Common myeloid progenitor, CD34-positive (primary cell): ENCODE measurements at regions of chr17 and their contacts with region 1.

Region 1: GRCh38 chr17:17681187-17681848 is at the start of gene RAI1:
- DNase-seq: peak; percentile 73 to 86 (median 83)
- H3K4me3 ChIP-seq: peak within 1 kb of the TSS; percentile 56 to 81 (median 77)
- H3K27ac ChIP-seq: peak within 1 kb of the TSS; percentile 70 to 89
- H3K4me1 ChIP-seq: peaks cover 0 to 57% (median 38%) of the 10 kb centered on the region in 4 experiments
- H3K27me3 ChIP-seq: no peaks in the 10 kb centered on the region

Region 2: DNA sequence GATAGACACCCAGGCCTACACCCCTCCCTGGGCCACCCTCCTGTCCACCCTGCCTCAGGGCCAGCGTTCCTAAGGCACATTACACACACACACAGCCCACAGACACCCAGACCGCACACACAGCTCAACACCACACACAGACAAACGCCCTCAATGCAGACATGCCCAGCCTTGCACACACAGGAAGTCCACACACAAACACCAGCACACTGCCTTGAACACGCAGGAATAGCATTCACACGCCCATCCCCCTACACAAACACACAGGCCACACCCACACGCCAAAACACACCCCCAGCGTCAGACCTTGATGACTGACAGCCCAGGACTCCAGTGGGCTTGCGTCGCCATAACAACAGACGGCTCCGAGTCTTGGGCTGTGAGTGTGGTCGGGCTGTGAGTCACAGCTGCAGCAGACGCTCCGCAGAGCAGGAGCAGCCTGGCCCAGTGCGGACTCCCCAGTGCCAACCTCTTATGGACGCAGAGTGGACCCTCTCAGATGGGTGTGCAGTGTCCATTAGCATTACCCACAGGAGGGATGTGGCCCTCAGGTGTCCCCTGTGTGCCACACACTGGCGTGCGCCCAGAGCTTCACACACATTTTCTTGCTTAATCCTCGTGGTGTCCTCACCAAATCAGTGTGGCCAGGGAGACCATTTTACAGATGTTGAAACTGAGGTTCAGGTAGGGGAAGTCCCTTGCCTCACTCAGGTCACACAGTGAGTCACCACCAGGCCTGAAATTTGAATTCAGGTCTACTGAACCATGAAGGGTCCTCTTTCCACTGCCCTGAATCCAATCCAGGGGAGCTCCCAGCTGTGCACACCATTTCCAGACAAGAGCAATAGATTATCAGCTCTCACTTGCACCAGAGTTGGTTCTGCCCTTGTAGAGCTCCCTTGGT is 17.9 kb before region 1 on chr17:
- CTCF ChIA-PET with region 1: interaction called, 20 read pairs
- POLR2A ChIA-PET with region 1: no interaction called
- DNase-seq: peak; percentile 90 to 98 (median 97)
- H3K4me3 ChIP-seq: no peak overlapping the region
- H3K27ac ChIP-seq: no peak overlapping the region
- H3K4me1 ChIP-seq: peaks cover 0 to 23% (median 8%) of the 10 kb centered on the region in 4 experiments
- H3K27me3 ChIP-seq: no peaks in the 10 kb centered on the region

Region 3: GRCh38 chr17:17668775-17669579 is 12.3 kb before region 1 on chr17:
- CTCF ChIA-PET with region 1: interaction called, 20 read pairs
- POLR2A ChIA-PET with region 1: no interaction called
- DNase-seq: peak in 2 of 3 donors; percentile 75 to 76
- H3K4me3 ChIP-seq: no peak overlapping the region
- H3K27ac ChIP-seq: no peak overlapping the region
- H3K4me1 ChIP-seq: peaks cover 4 to 52% (median 17%) of the 10 kb centered on the region in 4 experiments
- H3K27me3 ChIP-seq: no peaks in the 10 kb centered on the region

Region 4: GRCh38 chr17:17694169-17695081 is 13.1 kb after region 1 on chr17:
- CTCF ChIA-PET with region 1: interaction called, 29 read pairs
- POLR2A ChIA-PET with region 1: interaction called, 37 read pairs
- DNase-seq: peak; percentile 88 to 97 (median 95)
- H3K4me3 ChIP-seq: peak overlapping the region; percentile 48 to 81 (median 75)
- H3K27ac ChIP-seq: peak overlapping the region; percentile 89 to 92
- H3K4me1 ChIP-seq: peaks cover 11 to 95% (median 95%) of the 10 kb centered on the region in 4 experiments
- H3K27me3 ChIP-seq: no peaks in the 10 kb centered on the region

Region 5: GRCh38 chr17:17774009-17774881 is 92.9 kb after region 1 on chr17:
- CTCF ChIA-PET with region 1: interaction called, 10 read pairs
- POLR2A ChIA-PET with region 1: interaction called, 10 read pairs
- DNase-seq: peak in 2 of 3 donors; percentile 55 to 59
- H3K4me3 ChIP-seq: no peak overlapping the region
- H3K27ac ChIP-seq: no peak overlapping the region
- H3K4me1 ChIP-seq: peaks cover 0 to 33% (median 19%) of the 10 kb centered on the region in 4 experiments
- H3K27me3 ChIP-seq: no peaks in the 10 kb centered on the region